T-cell (primary cell): ENCODE measurements at regions of chr2 and their contacts with region 1.

Region 1: GRCh38 chr2:28780496-28780895 is 28.9 kb downstream of the PPP1CB start:
- DNase-seq: no peak
- ATAC-seq: no peak
- H3K4me3 ChIP-seq: no peak overlapping the region
- H3K4me3 Mint-ChIP-seq: no peak overlapping the region
- H3K27ac ChIP-seq: no peak overlapping the region
- H3K27ac Mint-ChIP-seq: peak overlapping the region in 1 of 2 donors; percentile 19
- H3K4me1 ChIP-seq: peaks cover 0 to 2% of the 10 kb centered on the region in 2 experiments
- H3K4me1 Mint-ChIP-seq: peaks cover 25 to 28% (median 25%) of the 10 kb centered on the region in 3 donors
- H3K27me3 ChIP-seq: no peaks in the 10 kb centered on the region
- H3K27me3 Mint-ChIP-seq: no peaks in the 10 kb centered on the region

Region 2: DNA sequence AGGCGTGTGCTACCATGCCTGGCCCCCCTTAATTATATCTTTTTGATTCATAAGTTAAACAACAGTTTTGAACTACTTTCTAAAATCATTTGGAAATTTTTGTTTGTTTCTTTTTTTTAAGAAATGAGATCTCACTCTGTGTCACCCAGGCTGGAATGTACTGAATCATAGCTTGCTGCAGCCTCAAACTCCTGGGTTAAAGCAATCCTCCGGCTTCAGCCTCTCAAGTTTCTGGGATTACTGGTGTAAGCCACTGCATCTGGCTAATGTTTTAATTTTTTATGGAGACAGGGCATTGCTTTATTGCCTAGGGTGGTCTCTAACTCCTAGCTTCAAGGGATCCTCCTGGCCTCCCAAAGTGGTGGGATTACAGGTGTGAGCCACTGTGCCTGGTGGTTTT is 818.5 kb before region 1 on chr2:
- CTCF ChIA-PET with region 1: no interaction called
- POLR2A ChIA-PET with region 1: interaction called in 1 of 2 experiments, 10 read pairs
- DNase-seq: no peak
- ATAC-seq: no peak
- H3K4me3 ChIP-seq: no peak overlapping the region
- H3K4me3 Mint-ChIP-seq: no peak overlapping the region
- H3K27ac ChIP-seq: no peak overlapping the region
- H3K27ac Mint-ChIP-seq: no peak overlapping the region
- H3K4me1 ChIP-seq: peaks cover 12 to 21% of the 10 kb centered on the region in 2 experiments
- H3K4me1 Mint-ChIP-seq: peaks cover 75 to 79% (median 78%) of the 10 kb centered on the region in 3 donors
- H3K27me3 ChIP-seq: no peaks in the 10 kb centered on the region
- H3K27me3 Mint-ChIP-seq: no peaks in the 10 kb centered on the region

Region 3: GRCh38 chr2:28537036-28537435 is 243.5 kb before region 1 on chr2:
- CTCF ChIA-PET with region 1: no interaction called
- POLR2A ChIA-PET with region 1: interaction called in 1 of 2 experiments, 17 read pairs
- DNase-seq: no peak
- ATAC-seq: no peak
- H3K4me3 ChIP-seq: no peak overlapping the region
- H3K4me3 Mint-ChIP-seq: no peak overlapping the region
- H3K27ac ChIP-seq: no peak overlapping the region
- H3K27ac Mint-ChIP-seq: no peak overlapping the region
- H3K4me1 ChIP-seq: no peaks in the 10 kb centered on the region
- H3K4me1 Mint-ChIP-seq: no peaks in the 10 kb centered on the region
- H3K27me3 ChIP-seq: peaks cover 0 to 11% of the 10 kb centered on the region in 2 experiments
- H3K27me3 Mint-ChIP-seq: peaks cover 8 to 15% of the 10 kb centered on the region in 2 donors

Region 4: DNA sequence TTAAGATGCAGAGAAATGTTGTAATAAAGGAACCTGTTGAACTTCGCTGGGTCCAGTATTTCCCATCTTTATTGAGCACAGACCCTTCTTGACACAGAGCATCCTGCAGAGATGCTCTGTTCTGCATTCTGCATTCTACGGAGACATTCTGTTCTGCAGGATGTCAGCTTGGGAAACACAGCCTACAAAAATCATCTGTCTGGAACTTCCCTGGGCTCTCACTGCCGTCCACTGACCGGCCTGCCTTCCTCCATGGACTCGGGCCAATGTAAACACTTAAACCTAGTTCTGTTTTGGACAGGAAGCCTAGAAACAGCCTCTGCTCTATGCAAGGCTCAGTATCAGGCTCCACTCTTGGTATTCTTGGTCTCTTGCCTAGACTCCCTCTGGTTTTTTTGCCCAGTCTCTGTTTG is 118.9 kb before region 1 on chr2:
- CTCF ChIA-PET with region 1: no interaction called
- POLR2A ChIA-PET with region 1: no interaction called
- DNase-seq: no peak
- ATAC-seq: no peak
- H3K4me3 ChIP-seq: no peak overlapping the region
- H3K4me3 Mint-ChIP-seq: no peak overlapping the region
- H3K27ac ChIP-seq: no peak overlapping the region
- H3K27ac Mint-ChIP-seq: no peak overlapping the region
- H3K4me1 ChIP-seq: peaks cover 4 to 6% of the 10 kb centered on the region in 2 experiments
- H3K4me1 Mint-ChIP-seq: peaks cover 19 to 21% (median 19%) of the 10 kb centered on the region in 3 donors
- H3K27me3 ChIP-seq: no peaks in the 10 kb centered on the region
- H3K27me3 Mint-ChIP-seq: no peaks in the 10 kb centered on the region

Region 5: DNA sequence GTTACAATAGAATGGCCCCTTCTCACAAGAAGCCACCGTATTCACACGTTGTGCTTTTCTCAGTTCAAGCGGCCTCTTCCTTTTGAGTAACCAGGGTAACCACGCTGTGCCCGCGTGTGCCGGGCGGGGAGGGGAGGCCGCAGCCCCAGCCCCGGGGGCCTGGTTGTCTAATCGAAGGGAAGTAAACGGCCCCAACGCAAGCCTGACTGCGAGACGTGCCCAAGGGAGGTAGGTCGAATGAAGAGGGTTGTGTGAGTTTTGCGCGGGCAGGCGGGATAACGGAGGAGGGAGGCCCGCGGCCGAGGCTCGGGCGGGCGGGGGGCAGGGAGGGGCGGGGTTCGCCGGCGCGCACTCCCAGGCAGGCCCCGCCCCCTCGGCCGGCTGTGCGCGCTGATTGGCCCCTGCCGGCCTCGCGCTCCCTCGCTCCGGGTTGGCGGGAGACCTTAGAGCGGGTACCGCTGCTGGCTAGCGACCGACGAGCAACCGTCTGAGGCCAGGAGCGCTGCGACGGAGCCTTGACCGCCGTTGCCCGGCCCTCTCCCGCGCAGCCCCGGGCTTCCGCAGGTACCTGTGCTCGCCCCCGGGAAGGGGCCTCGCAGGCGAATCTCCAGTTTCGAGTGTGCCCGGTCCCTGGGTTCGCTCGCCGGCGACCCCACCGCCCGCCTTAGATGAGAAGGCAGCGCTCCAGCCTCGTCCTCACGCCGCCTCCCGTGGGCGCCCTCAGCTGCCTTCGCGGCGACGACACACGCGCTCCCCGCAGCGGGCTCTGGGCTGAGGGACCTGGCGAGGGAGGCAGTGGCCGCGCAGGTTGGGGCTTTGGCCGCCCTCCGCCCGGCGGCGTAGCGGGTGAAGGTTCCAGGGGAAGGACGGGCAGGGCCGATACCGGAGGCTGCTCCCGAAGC is 30.1 kb after region 1 on chr2 and contains the start of gene SPDYA:
- CTCF ChIA-PET with region 1: no interaction called
- POLR2A ChIA-PET with region 1: interaction called in 1 of 2 experiments, 12 read pairs
- DNase-seq: peak; percentile 52 to 88 (median 70)
- ATAC-seq: peak; percentile 84 to 96 (median 96)
- H3K4me3 ChIP-seq: peak within 1 kb of the TSS; percentile 57 to 66
- H3K4me3 Mint-ChIP-seq: peak within 1 kb of the TSS; percentile 77 to 80 (median 79)
- H3K27ac ChIP-seq: no peak within 1 kb of the TSS
- H3K27ac Mint-ChIP-seq: peak within 1 kb of the TSS in 1 of 2 donors; percentile 64
- H3K4me1 ChIP-seq: peaks cover 3 to 19% of the 10 kb centered on the region in 2 experiments
- H3K4me1 Mint-ChIP-seq: peaks cover 6 to 17% (median 17%) of the 10 kb centered on the region in 3 donors
- H3K27me3 ChIP-seq: no peaks in the 10 kb centered on the region
- H3K27me3 Mint-ChIP-seq: no peaks in the 10 kb centered on the region
- total RNA-seq, gene SPDYA: 2.2 to 13.3 (median 3.0) TPM